HCT116 (cell line): ENCODE measurements at regions of chr17 and their contacts with region 1.

Region 1: GRCh38 chr17:80991645-80992076 is at the start of gene CHMP6:
- DNase-seq: peak; percentile 76
- ATAC-seq: peak; percentile 56
- H3K4me3 ChIP-seq: peak within 1 kb of the TSS; percentile 80 to 92
- H3K27ac ChIP-seq: peak within 1 kb of the TSS; percentile 88
- H3K4me1 ChIP-seq: peaks cover 29 to 46% of the 10 kb centered on the region in 2 experiments
- H3K27me3 ChIP-seq: no peaks in the 10 kb centered on the region
- CTCF ChIP-seq: no peak; a peak in 1 of 6 replicates
- POLR2A ChIP-seq: peak; percentile 31
- RAD21 ChIP-seq: no peak
- total RNA-seq, gene CHMP6: 22.0 TPM

Region 2: GRCh38 chr17:81025741-81026129 is 34.1 kb after region 1 on chr17:
- CTCF ChIA-PET with region 1: interaction called, 17 read pairs
- POLR2A ChIA-PET with region 1: no interaction called
- RAD21 ChIA-PET with region 1: no interaction called
- intact Hi-C with region 1: no loop called
- DNase-seq: no peak
- ATAC-seq: no peak
- H3K4me3 ChIP-seq: no peak overlapping the region
- H3K27ac ChIP-seq: no peak overlapping the region
- H3K4me1 ChIP-seq: peaks cover 13 to 18% of the 10 kb centered on the region in 2 experiments; a peak in 3 of 4 replicates
- H3K27me3 ChIP-seq: no peaks in the 10 kb centered on the region
- CTCF ChIP-seq: no peak
- POLR2A ChIP-seq: no peak
- RAD21 ChIP-seq: no peak

Region 3: GRCh38 chr17:81101614-81102306 is 110.1 kb after region 1 on chr17:
- CTCF ChIA-PET with region 1: interaction called, 8 read pairs
- POLR2A ChIA-PET with region 1: no interaction called
- RAD21 ChIA-PET with region 1: interaction called in 1 of 2 experiments, 3 read pairs
- intact Hi-C with region 1: loop called (anchors 1 kb)
- DNase-seq: peak; percentile 75
- ATAC-seq: peak; percentile 78
- H3K4me3 ChIP-seq: no peak overlapping the region
- H3K27ac ChIP-seq: peak overlapping the region; percentile 30; the same call in 1 of the 2 replicates
- H3K4me1 ChIP-seq: peaks cover 26 to 40% of the 10 kb centered on the region in 2 experiments
- H3K27me3 ChIP-seq: no peaks in the 10 kb centered on the region
- CTCF ChIP-seq: peak in 2 of 3 experiments; percentile 100; a peak in 4 of 6 replicates
- POLR2A ChIP-seq: no peak
- RAD21 ChIP-seq: no peak

Region 4: GRCh38 chr17:81238817-81239600 is 247.3 kb after region 1 on chr17 and contains the starts of genes NDUFAF8 and TEPSIN:
- CTCF ChIA-PET with region 1: interaction called, 3 read pairs
- POLR2A ChIA-PET with region 1: interaction called, 4 read pairs
- RAD21 ChIA-PET with region 1: no interaction called
- intact Hi-C with region 1: loop called (anchors 1 kb)
- DNase-seq: peak; percentile 100
- ATAC-seq: peak; percentile 93
- H3K4me3 ChIP-seq: peak within 1 kb of the TSS; percentile 94 to 100
- H3K27ac ChIP-seq: peak within 1 kb of the TSS; percentile 86
- H3K4me1 ChIP-seq: peaks cover 12 to 35% of the 10 kb centered on the region in 2 experiments; a peak in 3 of 4 replicates
- H3K27me3 ChIP-seq: no peaks in the 10 kb centered on the region
- CTCF ChIP-seq: no peak
- POLR2A ChIP-seq: peak; percentile 24
- RAD21 ChIP-seq: no peak
- total RNA-seq, gene NDUFAF8: 102 TPM
- total RNA-seq, gene TEPSIN: 50.6 TPM